Activated naive CD4-positive, alpha-beta T cell treated with anti-CD3 and anti-CD28 coated beads, Interleukin-2, amount 10 ng/mL, durations not matched to agents 7 days and 5 days (primary cell): ENCODE measurements at regions of chr17 and their contacts with region 1.

Region 1: DNA sequence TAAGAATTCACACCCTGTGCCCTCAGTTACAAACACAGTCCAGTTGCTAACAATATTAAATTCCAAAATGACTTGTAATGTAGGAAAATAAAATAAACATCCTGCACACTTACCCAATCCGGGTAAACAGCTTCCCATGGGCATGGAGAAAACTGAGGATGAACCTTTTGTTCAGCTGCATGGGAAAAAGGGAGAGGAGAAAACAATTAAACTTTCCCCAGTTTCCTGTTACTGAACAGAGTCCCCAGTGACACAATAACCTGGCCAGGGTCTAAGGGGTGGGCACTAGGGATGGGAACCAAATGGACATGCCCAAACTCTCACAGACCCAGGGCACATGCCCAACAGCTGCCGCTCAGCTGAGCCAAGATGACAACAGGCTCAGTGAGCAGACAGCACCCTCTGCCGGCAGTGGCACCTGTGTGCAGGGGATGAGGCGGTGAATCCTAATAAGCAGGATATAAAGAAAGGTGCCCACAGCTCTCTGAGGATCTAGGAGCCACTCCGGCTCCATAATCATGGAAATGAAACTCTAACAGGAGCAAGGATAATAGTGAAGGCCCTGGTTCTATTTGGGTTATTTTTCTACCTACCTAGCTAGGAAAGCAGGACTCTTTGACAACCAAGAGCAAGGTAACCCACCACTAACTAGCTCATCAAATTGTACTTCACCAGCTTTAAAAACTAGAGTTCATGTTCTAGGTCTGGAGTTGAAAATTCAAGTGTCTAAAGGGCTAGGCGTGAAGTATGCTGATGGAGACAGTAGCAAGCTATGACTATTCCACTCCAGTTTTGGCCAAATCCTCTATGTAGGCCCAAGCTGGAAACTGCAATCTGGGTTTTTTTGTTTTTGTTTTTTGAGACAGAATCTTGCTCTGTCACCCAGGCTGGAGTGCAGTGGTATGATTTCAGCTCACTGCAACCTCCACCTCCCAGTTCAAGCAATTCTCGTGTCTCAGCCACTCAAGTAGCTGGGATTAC is 58.8 kb downstream of the SMG6 start:
- DNase-seq: peak; percentile 91
- H3K4me3 Mint-ChIP-seq: no peak overlapping the region
- H3K27ac Mint-ChIP-seq: peak overlapping the region; percentile 78
- H3K4me1 Mint-ChIP-seq: peaks cover 83% of the 10 kb centered on the region
- H3K27me3 Mint-ChIP-seq: no peaks in the 10 kb centered on the region

Region 2: DNA sequence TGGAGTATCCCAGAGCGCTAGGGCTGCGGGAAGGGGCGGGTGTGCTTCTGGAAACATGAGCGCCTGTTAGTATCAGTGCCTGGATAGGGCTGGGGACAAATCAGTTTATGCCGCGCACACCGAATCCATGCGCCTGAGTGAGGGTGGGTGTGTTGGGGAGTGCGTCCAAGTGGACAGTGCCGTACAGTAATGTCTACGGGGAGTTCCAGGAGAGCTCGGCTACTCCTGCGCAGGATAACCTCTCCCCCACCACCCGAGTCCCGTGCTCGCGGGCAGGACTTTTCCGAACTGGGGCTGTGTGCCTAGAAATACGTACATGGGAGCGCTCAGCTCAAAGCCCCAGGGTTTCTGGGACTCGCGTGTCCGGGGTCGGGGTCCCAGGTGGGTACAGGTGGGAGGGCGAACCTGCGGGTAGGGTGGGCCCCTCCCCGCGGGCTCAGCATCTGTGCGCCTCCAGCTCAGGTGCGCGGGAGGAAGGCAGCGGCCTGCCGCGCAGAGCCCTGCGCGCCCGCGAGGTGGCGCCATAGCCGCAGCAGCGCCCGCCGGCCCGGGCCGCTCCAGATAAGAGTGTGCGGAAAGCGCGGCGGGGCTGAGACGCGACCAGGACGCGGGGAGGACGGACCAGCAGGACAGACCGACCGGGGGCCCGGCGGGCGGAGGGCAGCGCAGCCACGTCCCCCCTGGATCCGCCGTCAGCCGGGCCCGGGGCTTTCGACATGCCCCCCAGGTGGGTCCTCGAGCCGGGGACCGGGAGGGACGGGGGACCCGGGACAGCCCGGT is 190.1 kb before region 1 on chr17 and contains the start of gene HIC1:
- CTCF ChIA-PET with region 1: interaction called, 147 read pairs
- DNase-seq: peak; percentile 84
- H3K4me3 Mint-ChIP-seq: peak within 1 kb of the TSS; percentile 76
- H3K27ac Mint-ChIP-seq: peak within 1 kb of the TSS; percentile 83
- H3K4me1 Mint-ChIP-seq: peaks cover 32% of the 10 kb centered on the region
- H3K27me3 Mint-ChIP-seq: peaks cover 56% of the 10 kb centered on the region

Region 3: GRCh38 chr17:2070241-2071023 is 174.4 kb before region 1 on chr17:
- CTCF ChIA-PET with region 1: interaction called, 45 read pairs
- DNase-seq: peak; percentile 73
- H3K4me3 Mint-ChIP-seq: no peak overlapping the region
- H3K27ac Mint-ChIP-seq: peak overlapping the region; percentile 82
- H3K4me1 Mint-ChIP-seq: peaks cover 61% of the 10 kb centered on the region
- H3K27me3 Mint-ChIP-seq: no peaks in the 10 kb centered on the region

Region 4: DNA sequence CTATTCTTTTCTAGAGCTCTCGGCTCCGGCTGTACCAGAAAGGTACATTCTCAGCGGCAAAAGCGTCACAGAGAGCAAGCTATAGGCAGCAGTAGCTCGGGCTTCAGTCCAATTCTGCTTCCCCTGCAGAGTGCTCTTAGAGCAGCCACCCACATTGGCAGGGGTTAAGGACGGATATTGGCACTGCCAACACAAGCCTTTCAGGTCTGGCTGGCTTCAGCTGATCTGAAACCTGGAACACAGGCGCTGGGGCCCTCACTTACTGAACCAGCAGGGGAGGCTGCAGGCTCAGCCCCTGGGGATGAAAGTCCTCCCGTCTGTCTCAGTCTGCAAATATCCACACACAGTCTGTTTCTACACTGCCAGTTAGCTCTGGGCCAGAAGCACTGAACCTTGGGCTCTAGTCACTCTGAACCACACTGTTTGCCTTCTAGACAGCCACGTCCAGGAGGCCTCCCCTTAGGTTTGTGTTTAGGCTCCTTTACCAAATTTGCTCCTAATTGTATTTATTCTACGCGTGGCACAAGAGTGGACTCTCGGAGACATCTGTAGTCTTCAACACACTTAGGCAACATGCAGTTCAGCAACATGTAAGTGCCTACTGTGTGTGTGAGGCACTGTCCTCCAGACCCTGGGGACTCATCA is 149.8 kb before region 1 on chr17:
- CTCF ChIA-PET with region 1: interaction called, 16 read pairs
- DNase-seq: no peak
- H3K4me3 Mint-ChIP-seq: no peak overlapping the region
- H3K27ac Mint-ChIP-seq: no peak overlapping the region
- H3K4me1 Mint-ChIP-seq: peaks cover 50% of the 10 kb centered on the region
- H3K27me3 Mint-ChIP-seq: no peaks in the 10 kb centered on the region

Region 5: DNA sequence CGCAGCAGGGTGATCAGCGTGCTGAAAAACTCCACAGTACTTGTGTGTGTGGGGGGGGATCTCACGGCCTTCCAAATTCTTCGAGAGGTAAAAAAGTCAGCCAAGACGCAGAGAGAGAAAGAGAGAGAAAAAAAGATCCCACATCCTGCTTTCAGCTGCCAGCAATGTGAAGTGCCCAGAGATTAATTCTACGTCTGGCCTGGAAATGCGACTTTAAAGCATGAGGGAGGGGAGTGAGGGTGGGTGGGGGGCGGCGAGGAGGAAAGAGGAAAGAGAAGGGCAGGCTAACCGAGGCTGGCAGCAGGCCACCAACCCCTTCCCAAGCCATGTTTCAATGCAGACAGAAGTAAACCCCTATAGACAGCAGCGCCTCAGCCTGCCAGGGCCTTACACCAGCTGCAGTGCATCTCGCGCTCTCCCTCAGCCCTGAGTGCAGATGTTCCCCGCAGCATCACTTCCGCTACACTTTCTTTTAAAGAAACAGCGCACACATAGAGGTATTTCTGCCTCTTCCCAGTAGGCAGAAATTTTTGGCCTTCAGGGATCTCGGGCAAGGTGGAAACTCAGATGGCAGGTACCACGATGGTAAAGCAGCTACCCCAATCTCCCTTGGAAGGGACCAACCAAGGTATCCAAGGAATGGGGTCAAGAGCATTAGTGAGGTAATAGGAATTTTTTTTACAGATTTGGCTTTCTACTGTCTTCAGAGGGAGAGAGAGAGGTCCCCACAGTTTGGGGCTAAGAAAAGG is 29.0 kb before region 1 on chr17:
- CTCF ChIA-PET with region 1: interaction called, 10 read pairs
- DNase-seq: peak; percentile 84
- H3K4me3 Mint-ChIP-seq: peak overlapping the region; percentile 68
- H3K27ac Mint-ChIP-seq: peak overlapping the region; percentile 92
- H3K4me1 Mint-ChIP-seq: peaks cover 63% of the 10 kb centered on the region
- H3K27me3 Mint-ChIP-seq: no peaks in the 10 kb centered on the region

Region 6: GRCh38 chr17:2259769-2260536 is 15.1 kb after region 1 on chr17:
- CTCF ChIA-PET with region 1: interaction called, 71 read pairs
- DNase-seq: peak; percentile 88
- H3K4me3 Mint-ChIP-seq: peak overlapping the region; percentile 70
- H3K27ac Mint-ChIP-seq: peak overlapping the region; percentile 95
- H3K4me1 Mint-ChIP-seq: peaks cover 86% of the 10 kb centered on the region
- H3K27me3 Mint-ChIP-seq: no peaks in the 10 kb centered on the region

Region 7: DNA sequence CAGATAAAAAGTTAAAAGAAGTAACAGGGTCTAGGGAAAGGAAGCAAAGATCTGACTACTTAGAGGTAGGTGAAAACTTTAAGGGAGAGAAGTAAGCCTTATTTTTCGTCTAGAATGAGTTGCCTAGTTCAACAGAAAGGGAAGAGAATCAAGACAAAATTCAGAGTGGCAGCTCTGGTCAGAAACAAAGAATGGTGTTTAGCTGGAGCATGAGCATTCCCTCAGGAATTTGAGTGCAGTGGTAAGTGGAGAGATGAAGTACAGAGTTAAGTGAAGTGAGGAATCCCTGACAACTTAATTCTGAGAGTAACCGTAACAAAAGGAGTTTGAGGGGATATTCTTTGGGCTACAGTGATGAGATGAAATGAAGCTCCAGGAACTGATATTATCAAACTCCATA is 47.3 kb after region 1 on chr17:
- CTCF ChIA-PET with region 1: no interaction called
- DNase-seq: no peak
- H3K4me3 Mint-ChIP-seq: no peak overlapping the region
- H3K27ac Mint-ChIP-seq: no peak overlapping the region
- H3K4me1 Mint-ChIP-seq: peaks cover 20% of the 10 kb centered on the region
- H3K27me3 Mint-ChIP-seq: no peaks in the 10 kb centered on the region